ENCODE measurements at regions of chr16 and their contacts with region 1.

Region 1: DNA sequence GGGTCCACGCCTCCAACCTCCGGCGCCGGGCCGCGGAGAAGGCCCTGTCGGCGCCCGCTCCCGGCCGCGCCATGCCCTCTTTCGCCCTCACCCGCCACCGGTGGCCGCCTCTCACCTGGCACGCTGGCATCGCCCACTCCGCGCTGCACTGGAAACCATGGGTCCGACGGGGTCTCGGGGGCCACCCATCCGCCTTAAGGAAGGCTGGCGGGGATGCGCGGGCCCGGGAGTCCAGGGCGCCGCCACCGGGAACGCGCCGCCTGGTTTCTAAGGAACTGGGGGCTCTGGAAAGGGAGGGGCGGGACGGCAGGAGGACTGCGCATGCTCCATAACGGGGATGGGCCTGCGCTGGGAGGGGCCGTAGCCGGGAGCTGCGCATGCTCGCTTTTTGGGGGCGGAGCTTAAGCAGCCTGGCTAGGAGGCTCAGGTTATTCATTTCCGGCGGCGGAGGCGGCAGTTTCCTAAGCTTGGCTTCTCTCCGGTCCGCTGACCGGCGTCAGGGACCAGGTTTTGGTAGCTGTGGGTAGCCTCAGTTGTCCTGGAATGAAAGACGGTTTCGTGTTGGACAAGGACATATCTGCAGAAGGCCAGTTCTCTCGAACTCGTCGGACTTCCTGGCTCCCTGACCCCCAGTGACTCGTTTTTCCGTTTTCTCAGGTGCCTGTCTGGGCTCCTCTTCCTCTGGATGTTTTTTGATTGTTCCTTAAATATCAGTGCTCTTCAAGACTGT is at the start of gene GFOD2:
- DNase-seq: peak; percentile 93 to 100 (median 98)
- ATAC-seq: peak; percentile 91 to 92
- H3K4me3 Mint-ChIP-seq: peak within 1 kb of the TSS; percentile 90 to 99 (median 98)
- H3K27ac Mint-ChIP-seq: peak within 1 kb of the TSS; percentile 85 to 99 (median 98)
- H3K4me1 Mint-ChIP-seq: peaks cover 22 to 40% (median 33%) of the 10 kb centered on the region in 4 donors
- H3K27me3 Mint-ChIP-seq: no peaks in the 10 kb centered on the region
- polyA plus RNA-seq, gene GFOD2: 6.0 to 10.9 (median 6.5) TPM

Region 2: GRCh38 chr16:67806428-67807147 is 87.4 kb after region 1 on chr16 and contains the starts of genes RANBP10 and TSNAXIP1:
- POLR2A ChIA-PET with region 1: interaction called, 10 read pairs
- DNase-seq: peak; percentile 90 to 98 (median 97)
- ATAC-seq: peak; percentile 91 to 92
- H3K4me3 Mint-ChIP-seq: peak within 1 kb of the TSS; percentile 87 to 96 (median 92)
- H3K27ac Mint-ChIP-seq: peak within 1 kb of the TSS; percentile 77 to 98 (median 94)
- H3K4me1 Mint-ChIP-seq: peaks cover 16 to 50% (median 46%) of the 10 kb centered on the region in 4 donors
- H3K27me3 Mint-ChIP-seq: no peaks in the 10 kb centered on the region
- polyA plus RNA-seq, gene RANBP10: 5.8 to 13.8 (median 6.3) TPM
- polyA plus RNA-seq, gene TSNAXIP1: 0.14 TPM in 1 of 3 donors, not detected in the others

Measured in naive thymus-derived CD8-positive, alpha-beta T cell (primary cell).